HepG2 (cell line): ENCODE measurements at regions of chr17 and their contacts with region 1.

Region 1: DNA sequence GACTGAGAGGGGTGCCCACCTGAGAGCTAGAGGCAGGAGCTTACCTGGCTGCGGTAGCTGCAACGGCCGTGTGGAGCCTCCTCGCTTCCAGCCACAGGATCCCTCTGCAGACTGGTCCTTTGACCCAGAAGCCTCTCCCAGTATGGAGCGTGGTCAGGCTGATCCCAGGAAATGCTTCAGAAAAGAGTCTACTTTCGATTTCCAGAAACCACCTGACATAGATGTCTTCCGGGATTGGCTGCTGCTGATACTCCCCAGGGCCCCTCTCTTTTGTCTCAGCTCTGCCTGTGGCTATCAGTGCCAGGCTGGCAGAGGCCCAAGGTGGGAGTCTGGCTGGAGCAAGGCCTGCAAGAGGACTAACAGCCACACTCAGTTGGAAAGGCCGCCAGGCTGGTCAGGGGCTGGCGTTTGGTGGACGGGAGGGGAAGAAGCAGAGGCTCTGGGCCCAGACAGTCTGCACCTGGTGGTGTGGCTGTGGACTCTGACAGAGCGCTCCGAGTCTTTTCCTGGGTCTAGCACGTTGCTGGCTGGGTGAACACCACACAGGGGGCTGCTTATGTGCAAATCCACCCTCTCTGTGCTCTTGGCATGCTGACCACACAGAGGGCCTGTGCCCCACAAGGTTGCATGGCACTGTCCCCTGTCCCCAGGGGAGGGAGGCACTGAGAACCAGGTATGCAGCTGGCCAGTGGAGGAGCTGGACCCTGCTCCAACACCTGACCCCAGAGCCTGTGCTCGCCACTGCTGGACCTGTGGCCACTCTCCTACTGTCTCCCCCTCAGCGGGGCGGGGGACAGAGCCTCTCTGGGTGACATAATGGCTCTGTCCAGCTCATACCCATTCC is at the start of gene LGALS3BP:
- DNase-seq: peak; percentile 97
- ATAC-seq: peak; percentile 92
- H3K4me3 ChIP-seq: peak within 1 kb of the TSS; percentile 73 to 84 (median 81)
- H3K27ac ChIP-seq: peak within 1 kb of the TSS; percentile 88
- H3K4me1 ChIP-seq: peaks cover 55% of the 10 kb centered on the region
- H3K27me3 ChIP-seq: no peaks in the 10 kb centered on the region; a peak in 1 of 5 replicates
- CTCF ChIP-seq: peak; percentile 38
- EP300 ChIP-seq: no peak
- POLR2A ChIP-seq: peak; percentile 97 to 98
- RAD21 ChIP-seq: no peak; the same call in 1 of the 2 replicates
- total RNA-seq, gene LGALS3BP: 116 and 332 TPM in 2 replicates

Region 2: DNA sequence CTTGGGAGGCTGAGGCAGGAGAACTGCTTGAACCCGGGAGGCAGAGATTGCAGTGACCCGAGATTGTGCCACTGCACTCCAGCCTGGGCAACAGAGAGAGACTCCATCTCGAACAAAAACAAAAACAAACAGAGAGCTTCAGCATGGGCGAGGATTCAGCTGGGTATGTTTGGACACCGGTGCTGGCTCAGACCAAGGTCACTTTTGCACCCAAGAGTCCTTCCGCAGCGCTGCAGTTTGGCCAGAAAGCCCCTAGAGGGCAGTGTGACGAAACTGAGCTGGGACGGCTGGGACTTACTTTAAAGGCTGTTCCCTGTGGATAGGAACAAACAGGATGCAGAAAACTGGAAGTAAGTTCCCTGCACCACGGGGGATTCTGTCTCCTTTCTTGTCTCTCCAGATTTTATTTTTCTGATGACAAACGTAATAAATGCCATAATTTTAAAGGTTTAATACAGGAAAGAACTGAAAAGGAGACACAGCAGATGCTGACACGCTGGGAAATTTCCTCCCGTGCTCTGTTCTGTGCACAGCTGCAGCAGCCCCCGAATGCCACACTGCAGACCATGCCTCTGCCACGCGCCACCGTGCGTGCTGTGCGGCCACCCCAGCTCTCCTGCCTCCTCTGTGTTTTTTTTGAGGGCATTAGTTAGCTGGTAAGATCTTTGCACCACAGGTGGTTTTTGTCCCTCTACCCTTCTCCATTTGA is 114.2 kb before region 1 on chr17:
- CTCF ChIA-PET with region 1: no interaction called
- POLR2A ChIA-PET with region 1: interaction called, 15 read pairs
- in situ Hi-C with region 1: no loop called
- intact Hi-C with region 1: no loop called
- DNase-seq: peak; percentile 87
- ATAC-seq: peak; percentile 95
- H3K4me3 ChIP-seq: no peak overlapping the region
- H3K27ac ChIP-seq: no peak overlapping the region
- H3K4me1 ChIP-seq: peaks cover 15% of the 10 kb centered on the region
- H3K27me3 ChIP-seq: no peaks in the 10 kb centered on the region
- CTCF ChIP-seq: peak; percentile 97
- EP300 ChIP-seq: no peak
- POLR2A ChIP-seq: no peak
- RAD21 ChIP-seq: peak; percentile 92

Region 3: GRCh38 chr17:78925234-78925633 is 54.8 kb before region 1 on chr17 and contains the start of gene TIMP2:
- CTCF ChIA-PET with region 1: no interaction called
- POLR2A ChIA-PET with region 1: interaction called, 12 read pairs
- in situ Hi-C with region 1: no loop called
- intact Hi-C with region 1: no loop called
- DNase-seq: peak; percentile 70
- ATAC-seq: peak; percentile 79
- H3K4me3 ChIP-seq: peak within 1 kb of the TSS; percentile 78 to 82 (median 78)
- H3K27ac ChIP-seq: peak within 1 kb of the TSS; percentile 59
- H3K4me1 ChIP-seq: peaks cover 51% of the 10 kb centered on the region
- H3K27me3 ChIP-seq: peaks cover 6 to 32% of the 10 kb centered on the region in 2 experiments; a peak in 3 of 5 replicates
- CTCF ChIP-seq: 0 out of 2 replicates have a peak, but pooled peaks have one; percentile 23
- EP300 ChIP-seq: no peak
- POLR2A ChIP-seq: peak; percentile 65 to 84
- RAD21 ChIP-seq: no peak
- total RNA-seq, gene TIMP2: 2.2 and 3.8 TPM in 2 replicates

Region 4: DNA sequence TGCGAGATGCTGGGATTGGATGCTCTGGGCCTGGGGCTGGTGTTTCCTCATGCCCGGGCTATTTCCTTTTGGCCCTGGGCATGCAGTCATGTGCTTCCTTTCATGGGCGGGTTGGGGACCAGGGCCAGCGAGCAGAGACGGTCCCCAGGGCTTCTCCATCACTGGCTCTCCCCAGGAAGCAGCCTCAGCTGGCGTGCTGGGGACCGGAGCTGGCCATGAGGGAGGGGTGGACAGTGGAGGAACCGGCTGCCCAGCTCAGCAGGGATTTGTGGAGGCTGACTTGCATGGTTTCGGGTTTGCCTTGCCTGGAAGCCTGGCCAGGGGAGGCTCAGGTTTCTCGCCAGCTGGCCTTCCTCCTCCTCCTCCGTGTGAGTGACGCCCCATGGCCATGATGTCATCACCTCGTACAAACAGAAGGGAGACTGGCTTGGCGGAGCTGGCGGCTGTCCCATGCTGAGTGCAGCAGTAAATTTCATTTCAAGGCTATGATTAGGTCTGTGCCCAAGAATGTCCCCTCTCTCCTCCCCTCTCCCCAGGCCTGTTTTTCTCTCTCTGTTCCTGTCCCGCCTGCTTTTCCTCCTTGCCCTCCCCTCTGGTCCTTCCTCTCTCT is 45.9 kb before region 1 on chr17:
- CTCF ChIA-PET with region 1: no interaction called
- POLR2A ChIA-PET with region 1: interaction called, 15 read pairs
- in situ Hi-C with region 1: no loop called
- intact Hi-C with region 1: no loop called
- DNase-seq: peak; percentile 77
- ATAC-seq: peak; percentile 32
- H3K4me3 ChIP-seq: peak overlapping the region in 2 of 3 experiments; percentile 2 to 61; a peak in 3 of 6 replicates
- H3K27ac ChIP-seq: no peak overlapping the region
- H3K4me1 ChIP-seq: peaks cover 41% of the 10 kb centered on the region
- H3K27me3 ChIP-seq: peaks cover 10 to 54% of the 10 kb centered on the region in 2 experiments; a peak in 4 of 5 replicates
- CTCF ChIP-seq: no peak
- EP300 ChIP-seq: no peak
- POLR2A ChIP-seq: no peak
- RAD21 ChIP-seq: no peak

Region 5: GRCh38 chr17:78953356-78954265 is 26.4 kb before region 1 on chr17:
- CTCF ChIA-PET with region 1: no interaction called
- POLR2A ChIA-PET with region 1: interaction called, 19 read pairs
- in situ Hi-C with region 1: no loop called
- intact Hi-C with region 1: no loop called
- DNase-seq: no peak
- ATAC-seq: no peak
- H3K4me3 ChIP-seq: no peak overlapping the region
- H3K27ac ChIP-seq: no peak overlapping the region
- H3K4me1 ChIP-seq: peaks cover 27% of the 10 kb centered on the region
- H3K27me3 ChIP-seq: peaks cover 5 to 44% of the 10 kb centered on the region in 2 experiments; a peak in 4 of 5 replicates
- CTCF ChIP-seq: no peak
- EP300 ChIP-seq: no peak
- POLR2A ChIP-seq: no peak
- RAD21 ChIP-seq: no peak

Region 6: DNA sequence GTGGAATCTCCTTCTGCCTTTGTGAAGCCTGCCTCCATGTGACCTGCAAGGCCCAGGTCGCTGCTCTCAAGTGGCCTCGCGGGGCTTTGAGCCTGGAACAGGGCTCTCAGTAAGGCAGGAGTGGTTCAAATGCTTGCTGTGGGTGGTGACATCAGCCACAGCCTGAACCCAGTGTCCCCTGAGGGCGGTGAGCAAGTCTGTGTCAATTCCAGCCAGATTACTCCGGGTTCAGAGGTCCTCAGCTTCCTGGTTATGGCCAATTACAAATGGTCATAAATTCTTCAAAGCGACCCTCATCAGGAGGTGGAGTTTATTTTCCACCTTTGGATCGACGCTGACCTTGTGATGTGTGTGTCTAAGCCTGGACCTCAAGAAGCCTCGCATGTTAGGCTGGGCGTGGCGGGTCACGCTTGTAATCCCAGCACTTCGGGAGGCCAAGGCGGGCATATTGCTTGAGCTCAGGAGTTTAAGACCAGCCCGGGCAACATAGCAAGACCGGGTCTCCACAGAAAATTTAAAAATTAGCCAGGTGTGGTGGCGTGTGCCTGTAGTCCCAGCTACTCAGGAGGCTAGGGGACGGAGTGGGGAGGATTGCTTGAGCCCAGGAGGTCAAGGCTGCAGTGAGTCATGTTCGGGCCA is 17.5 kb before region 1 on chr17:
- CTCF ChIA-PET with region 1: no interaction called
- POLR2A ChIA-PET with region 1: interaction called, 51 read pairs
- in situ Hi-C with region 1: no loop called
- intact Hi-C with region 1: no loop called
- DNase-seq: peak; percentile 96
- ATAC-seq: peak; percentile 91
- H3K4me3 ChIP-seq: no peak overlapping the region
- H3K27ac ChIP-seq: peak overlapping the region; percentile 70
- H3K4me1 ChIP-seq: peaks cover 61% of the 10 kb centered on the region
- H3K27me3 ChIP-seq: peaks cover 0 to 1% of the 10 kb centered on the region in 2 experiments; a peak in 3 of 5 replicates
- CTCF ChIP-seq: peak; percentile 24
- EP300 ChIP-seq: peak; percentile 79 to 85
- POLR2A ChIP-seq: peak; percentile 46 to 60; a peak in 3 of 4 replicates
- RAD21 ChIP-seq: peak; percentile 10; the same call in 1 of the 2 replicates

Region 7: DNA sequence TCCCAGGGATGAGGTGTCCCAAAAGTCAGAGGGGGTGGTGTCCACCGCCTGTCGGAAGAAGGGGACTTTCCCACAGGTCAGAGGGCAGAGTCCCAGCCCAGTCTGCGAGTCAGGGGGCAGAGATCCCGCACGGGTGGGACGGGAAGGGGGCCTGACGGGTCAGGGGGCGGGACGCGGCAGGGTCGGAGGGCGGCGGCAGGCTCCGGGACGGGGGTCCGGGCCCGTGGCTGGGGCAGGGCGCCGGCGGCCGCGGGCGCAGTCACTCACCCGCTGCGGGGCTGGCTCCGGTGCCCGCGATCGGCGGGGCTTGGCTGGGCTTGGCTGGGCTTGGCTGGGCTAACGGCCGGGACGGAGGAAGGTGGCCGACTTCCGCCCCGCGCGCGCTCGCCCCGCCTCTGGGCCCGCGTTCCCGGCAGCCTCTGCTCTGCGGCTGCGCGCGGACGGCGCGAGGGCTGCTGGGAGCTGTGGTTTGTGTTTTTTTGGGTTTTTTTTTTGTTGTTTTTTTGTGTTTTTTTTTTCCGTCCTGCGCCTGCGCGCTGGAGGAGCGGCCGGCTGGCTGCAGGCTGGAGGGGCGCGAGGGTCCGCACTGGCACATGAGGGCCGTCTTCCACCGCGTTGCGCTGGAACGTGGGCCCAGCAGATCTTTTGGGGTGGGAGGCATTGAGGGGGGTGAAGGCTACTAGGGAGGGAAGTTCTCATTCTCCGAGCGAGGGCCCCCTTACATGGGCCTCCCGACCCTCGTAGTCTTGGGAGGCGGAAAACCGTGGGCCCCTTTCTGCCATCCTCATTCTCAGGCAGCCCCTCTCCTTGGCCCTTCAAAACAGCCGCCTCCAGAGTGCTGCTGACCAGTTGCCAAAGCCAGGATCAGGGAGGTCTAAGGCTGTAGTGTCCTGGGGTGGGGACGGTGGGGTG is 29.7 kb after region 1 on chr17 and contains the start of gene CANT1:
- CTCF ChIA-PET with region 1: no interaction called
- POLR2A ChIA-PET with region 1: interaction called, 23 read pairs
- in situ Hi-C with region 1: no loop called
- intact Hi-C with region 1: loop called (anchors 2 kb)
- DNase-seq: peak; percentile 84
- ATAC-seq: peak; percentile 93
- H3K4me3 ChIP-seq: peak within 1 kb of the TSS; percentile 95 to 98 (median 97)
- H3K27ac ChIP-seq: peak within 1 kb of the TSS; percentile 59
- H3K4me1 ChIP-seq: peaks cover 64% of the 10 kb centered on the region
- H3K27me3 ChIP-seq: peaks cover 0 to 2% of the 10 kb centered on the region in 2 experiments; a peak in 1 of 5 replicates
- CTCF ChIP-seq: no peak
- EP300 ChIP-seq: no peak
- POLR2A ChIP-seq: peak; percentile 59 to 87
- RAD21 ChIP-seq: no peak
- total RNA-seq, gene CANT1: 24.9 and 34.1 TPM in 2 replicates